ENCODE measurements at regions of chr1 and their contacts with region 1.

Region 1: GRCh38 chr1:220281159-220281574 is 8.9 kb upstream of the RAB3GAP2 start:
- DNase-seq: peak; percentile 50
- H3K27ac ChIP-seq: no peak overlapping the region
- CTCF ChIP-seq: peak; percentile 44

Region 2: DNA sequence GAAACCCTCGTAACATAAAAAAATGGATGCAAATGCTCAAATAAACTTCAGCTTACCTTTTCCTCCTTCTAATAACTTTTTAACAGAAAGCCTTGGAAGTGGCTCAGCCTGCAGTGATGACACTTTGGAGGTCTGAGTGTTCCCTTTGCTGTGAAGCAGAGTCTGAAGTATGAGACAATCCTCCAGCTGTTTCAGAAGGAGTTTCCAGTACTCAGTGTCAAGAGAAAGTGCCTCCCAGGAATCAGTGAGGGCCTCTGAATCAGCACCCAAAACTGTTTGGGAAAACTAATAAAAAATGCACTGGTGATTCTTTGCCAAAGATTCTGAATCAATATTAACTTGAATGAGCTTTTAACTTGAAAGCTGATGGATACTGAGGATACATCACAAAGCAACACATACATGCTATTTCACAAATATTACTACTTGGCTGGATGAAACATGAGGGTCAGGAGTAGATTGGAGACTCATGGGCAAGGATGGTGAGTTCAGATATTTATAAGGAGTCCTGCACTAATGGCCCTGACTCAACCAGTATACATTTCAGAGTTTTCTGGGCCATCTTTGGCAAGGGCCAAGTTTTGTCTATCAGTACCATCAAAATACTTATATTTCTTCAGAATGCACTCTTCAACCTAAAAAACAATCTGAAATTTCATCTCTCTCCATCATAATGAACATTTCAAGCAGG is 110.2 kb before region 1 on chr1:
- CTCF ChIA-PET with region 1: no interaction called
- POLR2A ChIA-PET with region 1: no interaction called
- DNase-seq: no peak
- H3K27ac ChIP-seq: no peak overlapping the region
- CTCF ChIP-seq: no peak

Region 3: DNA sequence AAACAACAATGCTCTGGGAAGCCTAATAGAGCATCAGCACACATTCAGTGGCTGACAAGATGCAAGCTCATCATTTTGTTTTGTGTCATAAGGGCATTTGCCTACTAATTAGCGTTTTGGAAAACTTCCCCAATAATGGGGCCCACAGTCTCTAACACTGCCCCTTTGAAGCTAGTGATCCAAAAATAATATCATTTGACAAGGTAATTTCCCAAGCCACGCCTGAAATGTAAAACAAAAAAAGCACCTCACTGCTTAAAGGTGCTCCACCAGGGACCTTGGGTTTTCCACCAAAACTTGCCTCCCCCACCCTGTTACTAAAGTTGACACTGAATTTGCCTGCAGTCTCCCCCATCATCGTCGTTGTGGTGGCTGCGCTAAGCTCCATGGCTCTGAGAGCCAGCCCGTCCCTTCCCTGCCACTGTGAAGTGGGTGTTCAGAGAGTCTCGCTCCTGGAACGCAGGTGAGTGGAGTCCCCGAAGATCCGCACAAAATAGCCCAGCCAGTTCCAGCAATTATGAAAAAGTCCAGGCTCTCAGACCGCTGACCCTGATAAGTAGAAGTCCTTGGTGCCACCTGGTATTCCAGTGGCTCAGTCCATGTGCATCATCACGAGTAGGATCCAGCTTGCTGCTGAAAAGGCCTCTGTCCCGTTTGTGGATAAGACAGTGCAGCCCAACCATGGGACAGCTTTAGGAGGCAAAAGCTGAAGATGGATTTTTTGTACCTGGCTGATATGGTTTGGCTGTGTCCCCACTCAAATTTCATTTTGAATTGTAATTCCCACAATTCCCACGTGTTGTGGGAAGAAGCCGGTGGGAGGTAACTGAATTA is 61.1 kb before region 1 on chr1:
- CTCF ChIA-PET with region 1: interaction called, 11 read pairs
- POLR2A ChIA-PET with region 1: no interaction called
- DNase-seq: no peak
- H3K27ac ChIP-seq: no peak overlapping the region
- CTCF ChIP-seq: no peak

Region 4: GRCh38 chr1:220669005-220669404 is 387.8 kb after region 1 on chr1:
- CTCF ChIA-PET with region 1: interaction called, 11 read pairs
- POLR2A ChIA-PET with region 1: no interaction called
- DNase-seq: no peak
- H3K27ac ChIP-seq: no peak overlapping the region
- CTCF ChIP-seq: no peak

Region 5: DNA sequence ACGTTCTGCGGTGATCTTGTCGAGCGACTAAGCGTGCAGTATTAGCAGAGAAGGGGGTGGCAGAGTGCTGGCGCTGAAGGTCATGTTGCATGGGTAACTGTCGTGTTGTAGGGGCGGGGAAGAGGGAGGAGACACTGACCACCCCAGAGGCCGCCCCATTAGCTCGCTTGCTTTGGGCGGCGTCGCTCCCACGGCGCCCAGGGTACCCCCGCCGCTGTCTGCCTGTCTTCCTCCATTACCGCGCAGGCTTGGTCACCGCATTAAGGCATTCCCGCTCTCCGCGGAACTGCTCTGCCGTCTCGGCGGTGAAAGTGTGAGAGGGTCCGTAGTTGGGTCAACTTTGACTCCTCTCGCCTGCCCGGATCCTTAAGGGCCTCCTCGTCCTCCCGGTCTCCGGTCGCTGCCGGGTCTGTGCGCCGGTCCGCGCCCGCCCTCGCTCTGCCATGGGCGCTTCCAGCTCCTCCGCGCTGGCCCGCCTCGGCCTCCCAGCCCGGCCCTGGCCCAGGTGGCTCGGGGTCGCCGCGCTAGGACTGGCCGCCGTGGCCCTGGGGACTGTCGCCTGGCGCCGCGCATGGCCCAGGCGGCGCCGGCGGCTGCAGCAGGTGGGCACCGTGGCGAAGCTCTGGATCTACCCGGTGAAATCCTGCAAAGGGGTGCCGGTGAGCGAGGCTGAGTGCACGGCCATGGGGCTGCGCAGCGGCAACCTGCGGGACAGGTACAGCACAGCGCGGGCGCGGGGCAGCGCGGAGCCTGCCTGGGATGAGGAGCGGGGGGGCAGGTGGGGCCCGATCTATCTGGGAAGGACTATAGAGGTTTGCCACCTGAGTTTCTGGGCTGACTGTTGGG is 467.1 kb after region 1 on chr1 and contains the start of gene MTARC2:
- CTCF ChIA-PET with region 1: interaction called, 13 read pairs
- POLR2A ChIA-PET with region 1: no interaction called
- DNase-seq: peak; percentile 54
- H3K27ac ChIP-seq: peak within 1 kb of the TSS; percentile 34
- CTCF ChIP-seq: no peak

Region 6: GRCh38 chr1:220776720-220777326 is 495.7 kb after region 1 on chr1:
- CTCF ChIA-PET with region 1: interaction called, 79 read pairs
- POLR2A ChIA-PET with region 1: no interaction called
- DNase-seq: peak; percentile 97
- H3K27ac ChIP-seq: no peak overlapping the region
- CTCF ChIP-seq: peak; percentile 87